Activated CD4-positive, alpha-beta T cell treated with anti-CD3 and anti-CD28 coated beads for 36 hours (primary cell): ENCODE measurements at regions of chr3 and their contacts with region 1.

Region 1: GRCh38 chr3:141561426-141562034 is 74.7 kb downstream of the RASA2 start:
- DNase-seq: peak; percentile 40
- ATAC-seq: no peak
- H3K4me3 Mint-ChIP-seq: no peak overlapping the region
- H3K27ac Mint-ChIP-seq: no peak overlapping the region
- H3K4me1 Mint-ChIP-seq: peaks cover 34% of the 10 kb centered on the region
- H3K27me3 Mint-ChIP-seq: no peaks in the 10 kb centered on the region

Region 2: DNA sequence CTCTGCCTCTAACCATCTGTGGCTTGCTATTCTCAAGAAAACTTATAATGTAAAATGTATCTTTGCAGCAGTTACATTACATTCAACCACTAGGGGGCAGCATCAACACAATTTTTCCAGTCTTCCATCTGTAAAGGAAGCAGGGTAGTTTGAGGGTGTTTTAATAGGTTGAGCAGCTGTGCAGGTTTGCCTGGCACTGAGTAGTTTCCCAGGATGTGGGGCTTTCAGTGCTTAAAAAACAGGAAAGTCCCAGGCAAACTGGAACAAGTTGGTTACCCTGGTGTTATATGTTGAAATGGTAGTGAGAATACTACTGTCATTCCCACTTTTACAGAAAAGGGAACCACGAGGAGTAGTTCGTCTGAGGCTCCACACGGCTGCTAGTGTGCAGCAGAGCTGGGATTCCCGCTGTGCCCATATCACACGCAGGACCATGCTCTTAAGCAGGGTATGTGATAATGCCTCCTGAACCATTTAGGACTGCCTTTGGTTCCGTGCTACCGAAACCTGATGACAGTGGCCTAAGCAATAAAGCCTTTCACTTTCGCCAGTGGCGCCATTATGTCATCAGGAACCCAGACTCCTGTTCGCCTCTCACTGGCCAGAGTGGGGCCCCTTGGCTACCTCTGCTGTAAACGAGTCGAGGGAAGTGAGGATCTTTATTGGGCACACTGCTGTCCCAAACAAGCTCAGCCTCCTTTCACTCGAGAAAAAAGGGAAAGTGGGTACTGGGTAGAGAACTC is 257.9 kb before region 1 on chr3:
- CTCF ChIA-PET with region 1: interaction called, 20 read pairs
- POLR2A ChIA-PET with region 1: no interaction called
- intact Hi-C with region 1: loop called in 1 of 2 experiments (anchors 2 kb)
- DNase-seq: peak; percentile 70
- ATAC-seq: peak; percentile 48
- H3K4me3 Mint-ChIP-seq: no peak overlapping the region
- H3K27ac Mint-ChIP-seq: no peak overlapping the region
- H3K4me1 Mint-ChIP-seq: peaks cover 51% of the 10 kb centered on the region
- H3K27me3 Mint-ChIP-seq: no peaks in the 10 kb centered on the region

Region 3: DNA sequence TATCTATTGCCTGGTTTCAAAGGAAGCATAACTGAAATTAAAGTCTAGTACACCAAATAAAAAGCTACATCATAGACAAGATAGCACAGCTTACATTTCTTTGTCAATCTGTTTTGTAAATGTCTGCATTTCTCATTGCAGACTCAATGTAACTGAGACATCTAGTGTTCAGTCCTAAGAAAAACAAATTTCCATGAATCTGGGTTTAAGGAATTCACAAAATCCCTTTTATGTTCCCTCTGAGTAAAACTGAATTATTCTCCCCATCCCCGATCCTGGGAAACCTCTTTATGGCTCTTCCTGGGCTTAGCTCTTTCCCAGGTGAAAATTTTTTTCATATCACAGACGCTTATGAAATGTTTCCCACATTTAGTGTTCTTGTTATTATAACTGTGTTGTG is 96.3 kb before region 1 on chr3:
- CTCF ChIA-PET with region 1: interaction called, 354 read pairs
- POLR2A ChIA-PET with region 1: no interaction called
- intact Hi-C with region 1: loop called (anchors 1 kb)
- DNase-seq: no peak
- ATAC-seq: no peak
- H3K4me3 Mint-ChIP-seq: no peak overlapping the region
- H3K27ac Mint-ChIP-seq: no peak overlapping the region
- H3K4me1 Mint-ChIP-seq: peaks cover 3% of the 10 kb centered on the region
- H3K27me3 Mint-ChIP-seq: no peaks in the 10 kb centered on the region

Region 4: DNA sequence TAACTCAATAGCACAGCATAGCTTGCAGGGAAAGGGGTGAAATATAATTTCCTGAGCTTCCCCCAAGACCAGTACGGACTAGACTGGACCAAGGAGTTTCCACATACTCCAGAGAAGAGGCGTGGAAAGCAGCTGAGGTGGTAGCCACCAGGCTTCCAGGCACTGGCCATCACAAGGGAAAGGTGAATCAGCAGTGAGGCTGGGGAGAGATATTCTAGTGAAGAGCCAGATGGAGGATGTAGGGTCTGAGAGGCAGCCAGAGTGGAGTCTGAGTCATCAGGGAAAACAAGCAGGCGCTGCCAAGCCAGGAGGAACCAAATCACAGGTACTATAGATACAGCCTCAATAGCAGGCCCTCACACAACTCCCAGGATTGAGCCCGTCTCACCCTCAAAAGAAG is 84.3 kb before region 1 on chr3:
- CTCF ChIA-PET with region 1: interaction called, 73 read pairs
- POLR2A ChIA-PET with region 1: no interaction called
- intact Hi-C with region 1: loop called (anchors 1 kb)
- DNase-seq: peak; percentile 38
- ATAC-seq: peak; percentile 68
- H3K4me3 Mint-ChIP-seq: no peak overlapping the region
- H3K27ac Mint-ChIP-seq: no peak overlapping the region
- H3K4me1 Mint-ChIP-seq: peaks cover 30% of the 10 kb centered on the region
- H3K27me3 Mint-ChIP-seq: no peaks in the 10 kb centered on the region

Region 5: DNA sequence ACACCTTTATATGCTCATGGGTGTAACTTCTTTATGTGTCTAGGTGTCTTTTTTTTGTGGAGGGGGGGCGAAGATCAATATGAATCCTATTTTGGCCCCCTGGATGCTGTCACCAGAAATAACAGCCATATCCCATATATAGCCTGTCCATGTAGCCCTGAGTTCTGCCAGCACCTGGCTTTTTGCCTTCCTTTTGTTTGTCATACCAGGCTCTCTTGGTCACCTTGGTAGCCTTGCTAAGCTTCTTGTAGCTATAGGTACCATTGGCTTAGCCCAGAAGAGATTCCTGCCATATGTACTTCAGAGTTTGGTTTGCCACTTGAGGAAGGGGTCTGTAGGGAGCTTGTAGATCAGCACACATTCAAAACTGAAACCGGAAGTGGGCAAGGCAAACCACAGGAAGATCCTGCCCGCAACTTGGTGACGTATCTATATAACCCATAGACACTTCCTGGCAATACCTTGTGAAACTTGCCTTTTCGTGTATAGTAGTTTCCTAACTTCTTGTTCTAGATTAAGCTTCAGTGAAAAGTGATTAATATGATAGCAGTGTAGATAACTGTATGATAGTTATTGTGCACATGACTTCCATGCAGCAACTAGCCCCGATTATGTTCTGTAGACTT is 62.8 kb before region 1 on chr3:
- CTCF ChIA-PET with region 1: interaction called, 28 read pairs
- POLR2A ChIA-PET with region 1: no interaction called
- intact Hi-C with region 1: loop called in 1 of 2 experiments (anchors 1 kb)
- DNase-seq: peak; percentile 90
- ATAC-seq: peak; percentile 84
- H3K4me3 Mint-ChIP-seq: peak overlapping the region; percentile 54
- H3K27ac Mint-ChIP-seq: peak overlapping the region; percentile 96
- H3K4me1 Mint-ChIP-seq: peaks cover 76% of the 10 kb centered on the region
- H3K27me3 Mint-ChIP-seq: no peaks in the 10 kb centered on the region

Region 6: GRCh38 chr3:141575879-141576743 is 14.6 kb after region 1 on chr3:
- CTCF ChIA-PET with region 1: interaction called, 20 read pairs
- POLR2A ChIA-PET with region 1: no interaction called
- intact Hi-C with region 1: no loop called
- DNase-seq: no peak
- ATAC-seq: peak; percentile 64
- H3K4me3 Mint-ChIP-seq: peak overlapping the region; percentile 14
- H3K27ac Mint-ChIP-seq: peak overlapping the region; percentile 70
- H3K4me1 Mint-ChIP-seq: peaks cover 12% of the 10 kb centered on the region
- H3K27me3 Mint-ChIP-seq: no peaks in the 10 kb centered on the region